Colonic mucosa (tissue), 4 donors: ENCODE measurements at regions of chr22 and their contacts with region 1.

Region 1: DNA sequence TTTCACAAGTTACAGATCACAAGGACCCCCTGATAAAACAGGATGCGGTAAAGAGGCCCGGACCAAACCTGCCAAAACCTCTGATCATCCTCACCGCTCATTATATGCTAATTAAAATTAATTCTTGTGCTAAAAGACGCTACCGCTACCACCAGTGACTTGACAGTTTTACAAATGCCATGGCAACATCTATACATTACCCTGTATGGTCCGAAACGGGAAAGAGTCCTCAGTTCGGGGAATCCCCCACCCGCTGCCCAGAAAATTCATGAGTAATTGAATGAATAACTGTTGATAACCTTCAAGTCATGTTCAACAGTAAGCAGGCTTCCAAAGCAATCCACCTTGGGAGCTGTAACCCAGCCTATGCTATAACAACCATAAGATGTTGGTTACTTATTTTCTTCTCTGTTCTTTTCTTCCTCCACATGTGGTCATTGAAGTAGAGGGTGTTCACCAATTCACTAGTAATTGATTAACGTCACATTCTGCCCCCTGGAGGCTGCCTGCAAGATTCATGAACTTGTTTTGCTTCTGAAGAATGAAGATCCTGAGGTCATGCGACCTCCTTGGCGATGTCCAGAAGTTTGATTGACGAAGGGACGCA is 20.6 kb downstream of the APOBEC3H start:
- DNase-seq: peak; percentile 70
- H3K4me3 ChIP-seq: no peak overlapping the region
- H3K27ac ChIP-seq: no peak overlapping the region
- H3K4me1 ChIP-seq: no peaks in the 10 kb centered on the region
- H3K27me3 ChIP-seq: no peaks in the 10 kb centered on the region
- CTCF ChIP-seq: peak; percentile 43

Region 2: DNA sequence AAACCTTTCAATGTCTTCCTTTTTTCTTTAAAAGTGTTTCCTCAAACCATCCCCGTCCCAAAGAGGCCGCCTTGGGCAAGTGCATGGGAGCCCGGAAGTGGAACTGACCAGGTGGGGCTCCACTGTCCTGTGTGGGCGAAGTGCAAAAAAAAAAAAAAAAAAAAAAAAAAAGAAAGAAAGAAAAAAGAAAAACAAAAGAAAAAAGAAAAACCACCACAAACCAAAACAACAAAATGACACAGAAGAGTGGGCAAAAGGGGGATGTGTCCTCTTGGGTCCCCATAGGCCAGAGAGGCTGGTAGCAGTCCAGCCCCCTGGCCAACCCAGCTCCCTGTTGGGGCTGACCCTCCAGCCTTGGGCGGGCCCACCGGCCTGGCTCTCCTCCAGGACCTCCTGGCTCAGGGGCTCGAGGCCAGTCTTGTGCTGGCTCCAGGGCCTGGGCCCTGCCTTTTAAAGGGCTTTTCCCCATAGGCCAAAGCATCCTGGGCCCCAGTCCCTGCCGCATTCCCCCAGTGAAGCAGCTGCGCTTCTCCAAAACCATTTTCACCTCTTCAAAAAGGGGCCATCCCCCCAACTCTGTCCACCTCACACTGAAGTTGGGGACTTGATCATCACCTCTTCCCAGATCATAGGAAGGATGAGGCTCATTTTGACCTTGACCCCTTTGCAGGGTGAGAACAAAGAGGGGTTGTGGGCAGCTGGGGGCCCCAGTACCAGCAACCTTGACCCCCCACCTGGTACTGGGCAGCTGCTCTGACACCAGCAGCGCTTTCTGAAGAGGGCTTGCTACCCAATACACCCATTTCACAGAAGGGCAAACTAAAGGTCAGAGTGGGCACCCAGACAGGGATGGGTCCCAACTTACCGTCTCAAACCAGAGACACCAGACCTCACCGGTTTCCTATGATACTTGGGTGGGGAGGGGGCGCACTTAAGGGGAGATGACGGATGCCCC is 255.0 kb before region 1 on chr22:
- intact Hi-C with region 1: loop called (anchors 2 kb)
- DNase-seq: no peak
- H3K4me3 ChIP-seq: no peak overlapping the region
- H3K27ac ChIP-seq: no peak overlapping the region
- H3K4me1 ChIP-seq: peaks cover 3% of the 10 kb centered on the region
- H3K27me3 ChIP-seq: no peaks in the 10 kb centered on the region
- CTCF ChIP-seq: no peak

Region 3: GRCh38 chr22:39175952-39176713 is 58.4 kb after region 1 on chr22:
- intact Hi-C with region 1: no loop called
- DNase-seq: no peak
- H3K4me3 ChIP-seq: no peak overlapping the region
- H3K27ac ChIP-seq: peak overlapping the region; percentile 13
- H3K4me1 ChIP-seq: peaks cover 3% of the 10 kb centered on the region
- H3K27me3 ChIP-seq: no peaks in the 10 kb centered on the region
- CTCF ChIP-seq: no peak

Region 4: GRCh38 chr22:39917776-39918495 is 800.2 kb after region 1 on chr22:
- intact Hi-C with region 1: no loop called
- DNase-seq: no peak
- H3K4me3 ChIP-seq: no peak overlapping the region
- H3K27ac ChIP-seq: no peak overlapping the region
- H3K4me1 ChIP-seq: no peaks in the 10 kb centered on the region
- H3K27me3 ChIP-seq: no peaks in the 10 kb centered on the region
- CTCF ChIP-seq: no peak